Right lobe of liver (tissue), 6 donors: ENCODE measurements at regions of chr6 and their contacts with region 1.

Region 1: GRCh38 chr6:31441365-31442267 is 38.2 kb downstream of the MICA start:
- DNase-seq: peak; percentile 81 to 87 (median 86)
- ATAC-seq: peak; percentile 98 to 99 (median 98)
- H3K4me3 ChIP-seq: no peak overlapping the region
- H3K27ac ChIP-seq: no peak overlapping the region
- H3K4me1 ChIP-seq: peaks cover 0 to 5% (median 0%) of the 10 kb centered on the region in 4 donors
- H3K27me3 ChIP-seq: no peaks in the 10 kb centered on the region
- CTCF ChIP-seq: peak; percentile 76 to 82 (median 80)
- POLR2A ChIP-seq: no peak

Region 2: GRCh38 chr6:31304683-31305082 is 136.9 kb before region 1 on chr6:
- intact Hi-C with region 1: no loop called
- DNase-seq: no peak
- ATAC-seq: no peak
- H3K4me3 ChIP-seq: no peak overlapping the region
- H3K27ac ChIP-seq: no peak overlapping the region
- H3K4me1 ChIP-seq: no peaks in the 10 kb centered on the region
- H3K27me3 ChIP-seq: peaks cover 0 to 14% of the 10 kb centered on the region in 2 donors
- CTCF ChIP-seq: no peak
- POLR2A ChIP-seq: no peak

Region 3: DNA sequence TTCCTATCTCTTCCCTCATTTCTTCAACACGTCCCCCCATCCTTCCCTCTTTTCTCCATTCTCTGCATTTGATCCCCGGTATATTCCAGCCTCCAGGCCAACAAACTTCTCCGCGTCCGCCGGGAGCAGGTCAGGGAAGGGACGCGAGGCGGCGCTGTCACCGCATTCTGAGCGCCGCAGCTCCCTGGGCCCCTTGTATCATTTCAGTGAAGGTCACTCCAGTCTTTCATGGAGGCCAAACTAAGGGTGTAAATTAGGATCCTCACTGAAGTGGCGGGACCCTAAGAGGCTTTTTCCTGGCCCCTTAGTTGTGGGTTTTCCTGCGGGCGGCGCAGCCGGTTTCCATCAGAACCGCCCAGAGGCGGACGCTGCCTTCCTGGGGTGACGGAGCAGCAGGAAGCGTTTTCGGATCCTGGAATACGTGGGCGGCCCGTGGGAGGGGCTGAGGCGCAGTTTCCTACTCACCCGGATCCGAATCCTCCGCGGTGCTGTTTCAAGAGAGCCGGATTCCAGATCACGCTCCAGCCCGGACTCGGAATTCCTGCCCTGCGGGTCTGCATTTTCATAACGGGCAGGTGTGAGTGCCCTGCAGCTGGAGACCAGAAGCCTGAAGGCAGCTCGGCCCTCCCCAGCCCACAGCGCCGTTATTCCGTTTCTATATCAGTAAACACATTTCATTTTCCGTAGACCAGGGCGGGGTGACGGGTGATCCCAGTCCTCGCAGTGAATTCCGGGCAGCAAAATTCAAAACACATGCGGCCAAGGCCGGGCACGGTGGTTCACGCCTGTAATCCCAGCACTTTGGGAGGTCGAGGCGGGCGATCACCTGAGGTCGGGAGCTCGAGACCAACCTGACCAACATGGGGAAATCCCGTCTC is 41.8 kb before region 1 on chr6:
- intact Hi-C with region 1: loop called (anchors 5 to 10 kb)
- DNase-seq: peak; percentile 92 to 93 (median 93)
- ATAC-seq: peak; percentile 77 to 84 (median 83)
- H3K4me3 ChIP-seq: peak overlapping the region; percentile 70 to 77 (median 77)
- H3K27ac ChIP-seq: peak overlapping the region; percentile 94 to 100 (median 98)
- H3K4me1 ChIP-seq: peaks cover 0 to 43% (median 15%) of the 10 kb centered on the region in 4 donors
- H3K27me3 ChIP-seq: no peaks in the 10 kb centered on the region
- CTCF ChIP-seq: peak; percentile 83 to 88 (median 86)
- POLR2A ChIP-seq: peak; percentile 72